Cardiac septum (tissue), 1 donor: ENCODE measurements at regions of chr2 and their contacts with region 1.

Region 1: GRCh38 chr2:205754924-205755321 is 72.6 kb downstream of the NRP2 start:
- DNase-seq: no peak

Region 2: GRCh38 chr2:205700331-205701132 is 54.4 kb before region 1 on chr2:
- intact Hi-C with region 1: loop called (anchors 5 kb)
- DNase-seq: no peak

Region 3: DNA sequence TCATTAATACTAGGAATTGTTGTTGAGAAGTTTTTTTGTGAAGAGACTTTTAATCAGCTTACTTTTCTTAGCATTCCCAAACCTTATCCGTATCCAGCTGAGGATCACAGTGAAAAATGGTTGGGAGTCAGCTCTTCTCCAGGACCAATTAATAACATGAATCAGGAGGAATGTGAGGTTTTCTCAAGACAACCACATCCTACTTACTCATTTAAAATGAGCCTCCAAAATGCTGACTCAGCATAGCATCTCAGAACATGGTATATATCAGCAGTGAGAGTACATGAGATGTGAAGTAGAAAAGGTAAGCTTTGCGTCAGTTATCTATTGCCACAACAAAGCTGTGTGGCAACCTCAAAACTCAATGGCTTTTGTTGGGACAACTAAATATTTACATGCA is 67.7 kb after region 1 on chr2:
- intact Hi-C with region 1: no loop called
- DNase-seq: no peak

Region 4: GRCh38 chr2:205858881-205859441 is 104.0 kb after region 1 on chr2:
- intact Hi-C with region 1: no loop called
- DNase-seq: no peak

Region 5: GRCh38 chr2:206343816-206344215 is 588.9 kb after region 1 on chr2:
- intact Hi-C with region 1: no loop called
- DNase-seq: no peak